GM23248 (cell line): ENCODE measurements at regions of chr18 and their contacts with region 1.

Region 1: GRCh38 chr18:43606795-43607194 is 329.5 kb upstream of the SYT4 start:
- DNase-seq: no peak
- H3K4me3 ChIP-seq: no peak overlapping the region
- H3K27ac ChIP-seq: no peak overlapping the region
- H3K4me1 ChIP-seq: no peaks in the 10 kb centered on the region
- H3K27me3 ChIP-seq: no peaks in the 10 kb centered on the region; the same call in 1 of the 2 replicates

Region 2: GRCh38 chr18:43563780-43564179 is 43.0 kb before region 1 on chr18:
- in situ Hi-C with region 1: no loop called
- DNase-seq: peak; percentile 55
- H3K4me3 ChIP-seq: no peak overlapping the region
- H3K27ac ChIP-seq: no peak overlapping the region
- H3K4me1 ChIP-seq: no peaks in the 10 kb centered on the region
- H3K27me3 ChIP-seq: peaks cover 13% of the 10 kb centered on the region

Region 3: GRCh38 chr18:43650426-43650825 is 43.6 kb after region 1 on chr18:
- in situ Hi-C with region 1: loop called (anchors 10 kb)
- DNase-seq: no peak
- H3K4me3 ChIP-seq: no peak overlapping the region
- H3K27ac ChIP-seq: no peak overlapping the region
- H3K4me1 ChIP-seq: no peaks in the 10 kb centered on the region
- H3K27me3 ChIP-seq: no peaks in the 10 kb centered on the region